ENCODE measurements at regions of chr10 and their contacts with region 1.

Region 1: DNA sequence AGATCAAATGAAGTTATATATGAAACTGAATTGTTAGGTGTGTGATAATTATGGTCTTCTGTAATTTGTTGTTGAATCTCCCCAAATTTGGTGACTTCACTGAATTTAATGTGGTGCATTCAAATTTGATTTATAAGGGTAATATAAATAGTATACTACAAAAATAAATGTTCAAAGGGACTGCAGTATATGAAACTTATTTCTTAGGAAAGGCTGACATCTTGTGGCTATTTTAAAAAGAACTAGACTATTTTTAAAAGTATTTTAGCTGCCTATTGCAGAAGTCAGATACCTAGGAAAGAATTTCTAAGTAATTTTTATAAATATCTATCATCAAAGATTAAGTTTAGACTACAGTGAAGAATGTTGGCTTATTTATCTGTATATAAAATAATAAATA is 36.6 kb downstream of the ATRNL1 start:
- DNase-seq: no peak
- H3K4me3 ChIP-seq: no peak overlapping the region
- H3K27ac ChIP-seq: no peak overlapping the region
- H3K4me1 ChIP-seq: no peaks in the 10 kb centered on the region
- H3K27me3 ChIP-seq: no peaks in the 10 kb centered on the region
- CTCF ChIP-seq: peak in 3 of 4 experiments; percentile 37 to 44 (median 39)
- POLR2A ChIP-seq: no peak

Region 2: GRCh38 chr10:114856544-114857282 is 273.0 kb before region 1 on chr10:
- intact Hi-C with region 1: no loop called
- DNase-seq: no peak
- H3K4me3 ChIP-seq: no peak overlapping the region
- H3K27ac ChIP-seq: no peak overlapping the region
- H3K4me1 ChIP-seq: no peaks in the 10 kb centered on the region
- H3K27me3 ChIP-seq: no peaks in the 10 kb centered on the region
- CTCF ChIP-seq: no peak
- POLR2A ChIP-seq: no peak

Region 3: GRCh38 chr10:114876602-114877300 is 253.0 kb before region 1 on chr10:
- intact Hi-C with region 1: loop called (anchors 2 kb)
- DNase-seq: peak; percentile 29
- H3K4me3 ChIP-seq: no peak overlapping the region
- H3K27ac ChIP-seq: peak overlapping the region in 1 of 2 donors; percentile 42
- H3K4me1 ChIP-seq: no peaks in the 10 kb centered on the region
- H3K27me3 ChIP-seq: no peaks in the 10 kb centered on the region
- CTCF ChIP-seq: peak; percentile 34 to 63 (median 52)
- POLR2A ChIP-seq: no peak

Region 4: GRCh38 chr10:115250784-115251183 is 121.0 kb after region 1 on chr10:
- intact Hi-C with region 1: no loop called
- DNase-seq: no peak
- H3K4me3 ChIP-seq: no peak overlapping the region
- H3K27ac ChIP-seq: no peak overlapping the region
- H3K4me1 ChIP-seq: no peaks in the 10 kb centered on the region
- H3K27me3 ChIP-seq: no peaks in the 10 kb centered on the region
- CTCF ChIP-seq: no peak
- POLR2A ChIP-seq: no peak

Measured in prostate gland (tissue), 2 donors.